ENCODE measurements at regions of chr17 and their contacts with region 1.

Region 1: GRCh38 chr17:42183741-42184711 is 1.2 kb downstream of the HCRT start:
- DNase-seq: peak; percentile 94
- H3K4me3 ChIP-seq: peak overlapping the region; percentile 28 to 41; a peak in 3 of 4 replicates
- H3K27ac ChIP-seq: no peak overlapping the region
- H3K4me1 ChIP-seq: peaks cover 4 to 15% of the 10 kb centered on the region in 2 experiments; a peak in 2 of 4 replicates
- H3K27me3 ChIP-seq: no peaks in the 10 kb centered on the region
- CTCF ChIP-seq: peak; percentile 70
- EP300 ChIP-seq: no peak
- RAD21 ChIP-seq: no peak

Region 2: DNA sequence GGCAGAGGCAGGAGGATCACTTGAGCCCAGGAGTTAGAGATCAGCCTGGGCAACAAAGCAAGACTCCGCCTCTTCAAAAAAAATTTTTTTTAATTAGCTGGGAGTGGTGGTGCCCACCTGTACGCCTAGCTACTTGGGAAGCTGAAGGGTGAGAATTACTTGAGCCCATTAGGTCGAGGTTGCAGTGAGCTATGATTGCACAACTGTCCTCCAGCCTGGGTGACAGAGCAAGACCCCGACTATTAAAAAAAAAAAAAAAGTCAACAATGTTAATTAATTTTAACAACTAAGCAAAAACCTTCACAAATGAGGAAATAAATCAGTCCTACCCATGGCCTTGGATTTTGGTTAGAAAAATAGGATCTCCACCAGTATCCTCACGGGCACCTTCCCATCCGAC is 76.9 kb before region 1 on chr17:
- CTCF ChIA-PET with region 1: no interaction called
- POLR2A ChIA-PET with region 1: no interaction called
- DNase-seq: no peak
- H3K4me3 ChIP-seq: peak overlapping the region; percentile 41 to 59
- H3K27ac ChIP-seq: no peak overlapping the region
- H3K4me1 ChIP-seq: peaks cover 0 to 11% of the 10 kb centered on the region in 2 experiments; a peak in 1 of 4 replicates
- H3K27me3 ChIP-seq: no peaks in the 10 kb centered on the region
- CTCF ChIP-seq: no peak
- EP300 ChIP-seq: no peak
- RAD21 ChIP-seq: no peak

Region 3: GRCh38 chr17:42120770-42121769 is 63.0 kb before region 1 on chr17 and contains the start of gene KAT2A:
- CTCF ChIA-PET with region 1: interaction called, 17 read pairs
- POLR2A ChIA-PET with region 1: no interaction called
- DNase-seq: peak; percentile 97
- H3K4me3 ChIP-seq: peak within 1 kb of the TSS; percentile 49 to 71
- H3K27ac ChIP-seq: peak within 1 kb of the TSS in 1 of 2 experiments; percentile 64; a peak in 2 of 4 replicates
- H3K4me1 ChIP-seq: peaks cover 0 to 11% of the 10 kb centered on the region in 2 experiments; a peak in 1 of 4 replicates
- H3K27me3 ChIP-seq: no peaks in the 10 kb centered on the region
- CTCF ChIP-seq: no peak
- EP300 ChIP-seq: no peak
- RAD21 ChIP-seq: no peak
- polyA plus RNA-seq, gene KAT2A: 45.1 and 58.6 TPM in 2 replicates

Region 4: GRCh38 chr17:42132941-42133340 is 51.1 kb before region 1 on chr17:
- CTCF ChIA-PET with region 1: interaction called, 13 read pairs
- POLR2A ChIA-PET with region 1: no interaction called
- DNase-seq: no peak
- H3K4me3 ChIP-seq: no peak overlapping the region
- H3K27ac ChIP-seq: peak overlapping the region in 1 of 2 experiments; percentile 25; a peak in 3 of 4 replicates
- H3K4me1 ChIP-seq: peaks cover 17 to 29% of the 10 kb centered on the region in 2 experiments; a peak in 3 of 4 replicates
- H3K27me3 ChIP-seq: no peaks in the 10 kb centered on the region
- CTCF ChIP-seq: no peak
- EP300 ChIP-seq: no peak
- RAD21 ChIP-seq: no peak

Region 5: DNA sequence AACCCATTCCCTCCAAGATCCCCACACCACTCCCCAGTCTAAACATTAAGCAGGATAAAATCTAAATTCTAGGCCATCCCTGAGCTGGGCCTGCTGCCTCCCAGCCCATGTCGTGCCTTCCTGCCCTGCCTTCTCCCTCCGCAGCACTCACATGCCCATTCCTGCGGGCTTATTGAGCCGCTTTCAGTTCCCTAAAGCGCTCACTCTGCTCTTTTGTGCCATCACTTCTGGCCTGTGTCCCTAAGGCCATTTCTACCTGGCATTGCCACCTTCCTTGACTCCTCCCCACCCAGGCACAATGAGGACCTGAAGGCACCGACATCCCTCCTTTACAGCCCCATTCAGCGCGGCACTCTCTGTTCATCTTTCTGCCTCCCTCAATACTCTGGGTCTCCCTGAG is 16.2 kb before region 1 on chr17:
- CTCF ChIA-PET with region 1: interaction called, 10 read pairs
- POLR2A ChIA-PET with region 1: no interaction called
- DNase-seq: no peak
- H3K4me3 ChIP-seq: no peak overlapping the region
- H3K27ac ChIP-seq: no peak overlapping the region
- H3K4me1 ChIP-seq: no peaks in the 10 kb centered on the region
- H3K27me3 ChIP-seq: no peaks in the 10 kb centered on the region
- CTCF ChIP-seq: no peak
- EP300 ChIP-seq: no peak
- RAD21 ChIP-seq: no peak

Region 6: DNA sequence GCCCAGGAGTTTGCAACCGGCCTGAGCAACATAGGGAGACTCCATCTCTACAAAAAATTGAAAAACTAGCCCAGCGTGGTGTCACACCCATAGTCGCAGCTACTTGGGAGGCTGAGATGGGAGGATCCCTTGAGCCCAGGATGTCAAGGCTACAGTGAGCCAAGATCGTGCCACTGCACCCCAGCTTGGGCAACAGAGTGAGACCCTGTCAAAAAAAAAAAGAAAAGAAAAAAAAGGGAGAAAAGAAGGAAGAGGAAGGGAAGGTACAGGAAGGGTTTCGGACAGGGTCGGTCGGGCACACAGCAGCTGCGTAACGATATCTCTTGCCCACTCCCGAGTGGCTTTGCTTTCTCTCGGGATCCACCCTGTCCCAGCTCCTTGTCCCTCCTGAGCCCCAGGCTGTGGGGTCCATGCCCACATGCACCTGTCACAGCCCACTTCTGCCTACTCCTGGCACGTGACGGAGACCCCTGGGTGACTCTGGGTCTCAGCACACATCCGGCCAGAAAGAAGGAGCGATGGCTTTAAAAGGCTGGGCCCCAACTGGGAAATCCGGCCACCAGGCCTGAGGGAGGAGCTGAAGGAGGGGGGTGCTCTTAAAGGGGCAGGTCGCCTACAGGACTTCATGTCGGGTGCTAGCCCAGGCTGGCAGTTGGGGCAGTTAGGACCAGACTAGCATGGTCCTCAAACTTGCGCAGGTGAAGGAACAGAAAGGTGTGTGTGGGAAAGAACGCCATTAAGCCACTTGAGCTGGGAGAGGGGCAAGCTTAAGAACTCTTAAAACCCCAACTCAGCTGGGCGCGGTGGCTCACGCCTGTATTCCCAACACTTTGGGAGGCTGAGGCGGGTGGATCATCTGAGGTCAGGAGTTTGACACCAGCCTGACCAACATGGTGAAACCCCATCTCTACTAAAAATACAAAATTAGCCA is 10.2 kb after region 1 on chr17 and contains the start of gene GHDC:
- CTCF ChIA-PET with region 1: interaction called, 30 read pairs
- POLR2A ChIA-PET with region 1: interaction called, 12 read pairs
- DNase-seq: peak; percentile 93
- H3K4me3 ChIP-seq: peak within 1 kb of the TSS; percentile 61 to 75
- H3K27ac ChIP-seq: peak within 1 kb of the TSS in 1 of 2 experiments; percentile 56; a peak in 1 of 4 replicates
- H3K4me1 ChIP-seq: peaks cover 0 to 12% of the 10 kb centered on the region in 2 experiments; a peak in 1 of 4 replicates
- H3K27me3 ChIP-seq: no peaks in the 10 kb centered on the region
- CTCF ChIP-seq: no peak
- EP300 ChIP-seq: no peak
- RAD21 ChIP-seq: no peak
- polyA plus RNA-seq, gene GHDC: 15.8 and 18.0 TPM in 2 replicates

Region 7: GRCh38 chr17:42200702-42201101 is 16.7 kb after region 1 on chr17:
- CTCF ChIA-PET with region 1: interaction called, 30 read pairs
- POLR2A ChIA-PET with region 1: no interaction called
- DNase-seq: peak; percentile 82
- H3K4me3 ChIP-seq: no peak overlapping the region
- H3K27ac ChIP-seq: peak overlapping the region in 1 of 2 experiments; percentile 83; a peak in 2 of 4 replicates
- H3K4me1 ChIP-seq: peaks cover 0 to 12% of the 10 kb centered on the region in 2 experiments; a peak in 1 of 4 replicates
- H3K27me3 ChIP-seq: no peaks in the 10 kb centered on the region
- CTCF ChIP-seq: no peak
- EP300 ChIP-seq: no peak
- RAD21 ChIP-seq: no peak

Region 8: GRCh38 chr17:42312285-42313130 is 128.5 kb after region 1 on chr17:
- CTCF ChIA-PET with region 1: interaction called, 11 read pairs
- POLR2A ChIA-PET with region 1: no interaction called
- DNase-seq: peak; percentile 93
- H3K4me3 ChIP-seq: no peak overlapping the region; a peak in 1 of 4 replicates
- H3K27ac ChIP-seq: peak overlapping the region in 1 of 2 experiments; percentile 51; a peak in 2 of 4 replicates
- H3K4me1 ChIP-seq: peaks cover 0 to 15% of the 10 kb centered on the region in 2 experiments; a peak in 2 of 4 replicates
- H3K27me3 ChIP-seq: no peaks in the 10 kb centered on the region
- CTCF ChIP-seq: peak; percentile 65
- EP300 ChIP-seq: peak in 1 of 2 experiments; percentile 2; a peak in 1 of 4 replicates
- RAD21 ChIP-seq: peak; percentile 70

Measured in SK-N-SH (cell line).